Posterior vena cava (tissue), 2 donors: ENCODE measurements at regions of chr12 and their contacts with region 1.

Region 1: DNA sequence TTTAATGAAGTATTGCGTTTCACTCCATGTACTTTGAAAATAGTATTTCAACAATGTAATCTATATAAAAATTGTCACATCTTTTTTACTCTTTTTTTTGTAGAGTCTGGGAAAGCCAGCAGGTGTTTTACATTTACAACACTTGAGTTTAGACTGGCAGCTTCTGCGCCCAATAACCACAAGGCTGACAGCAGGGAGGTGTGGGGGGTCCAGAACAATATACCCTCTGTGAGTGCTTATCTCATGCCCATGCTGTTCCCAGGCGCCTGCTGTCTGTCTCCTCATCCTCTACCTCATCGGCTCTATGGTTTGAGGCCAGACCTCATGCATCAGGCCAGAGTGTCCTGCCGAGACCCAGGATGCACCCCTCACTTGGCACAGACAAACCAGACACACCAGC is 24.9 kb downstream of the FBRSL1 start:
- DNase-seq: no peak

Region 2: DNA sequence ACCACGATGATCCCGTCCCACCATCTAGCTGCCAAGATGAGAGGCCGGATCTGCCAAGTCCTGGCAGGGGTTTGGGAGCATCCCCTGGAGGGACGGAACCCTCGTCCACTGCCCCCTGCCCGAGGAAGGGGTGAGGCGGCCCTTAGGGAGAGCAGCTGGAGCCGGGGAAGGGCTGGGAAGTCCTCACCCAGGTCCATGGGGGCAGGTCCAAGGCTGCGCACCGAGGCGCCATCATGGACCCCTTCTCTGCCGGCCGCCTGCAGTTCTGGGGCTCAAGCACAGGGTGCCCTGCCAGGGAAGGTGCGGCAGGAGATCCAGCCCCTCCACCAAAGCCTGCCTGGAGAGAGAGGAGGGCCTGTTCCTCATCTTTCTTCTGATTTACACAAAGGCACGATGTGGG is 42.5 kb before region 1 on chr12:
- intact Hi-C with region 1: loop called in 1 of 2 experiments (anchors 1 kb)
- DNase-seq: no peak